Head of caudate nucleus (tissue), 42 donors: ENCODE measurements at regions of chr20 and their contacts with region 1.

Region 1: GRCh38 chr20:21235484-21236445 is 67.4 kb upstream of the XRN2 start:
- DNase-seq: peak; percentile 64 to 94 (median 87)

Region 2: DNA sequence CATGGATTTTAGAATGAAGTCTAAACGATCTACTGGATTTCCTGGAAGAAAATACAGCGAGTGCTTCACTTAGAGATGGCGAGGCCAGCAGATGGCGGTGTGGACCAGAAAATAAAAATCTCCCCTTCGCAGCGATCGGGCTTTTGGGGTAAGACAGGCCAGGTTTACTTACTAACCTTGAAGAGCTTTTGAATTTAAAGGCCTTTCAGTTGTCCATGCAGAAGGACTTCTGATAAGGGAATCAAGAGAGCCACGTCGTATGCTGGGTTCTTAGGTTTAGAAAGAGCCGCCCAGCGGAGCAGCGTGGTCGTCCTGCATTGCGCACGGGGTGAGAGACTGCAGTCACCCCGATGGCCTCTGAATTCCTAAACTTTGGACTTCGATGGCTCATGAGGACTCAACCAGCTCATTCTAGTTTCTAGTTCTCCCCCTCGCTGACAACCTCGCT is 398.2 kb before region 1 on chr20:
- intact Hi-C with region 1: loop called (anchors 5 kb)
- DNase-seq: peak; percentile 31 to 93 (median 82)

Region 3: DNA sequence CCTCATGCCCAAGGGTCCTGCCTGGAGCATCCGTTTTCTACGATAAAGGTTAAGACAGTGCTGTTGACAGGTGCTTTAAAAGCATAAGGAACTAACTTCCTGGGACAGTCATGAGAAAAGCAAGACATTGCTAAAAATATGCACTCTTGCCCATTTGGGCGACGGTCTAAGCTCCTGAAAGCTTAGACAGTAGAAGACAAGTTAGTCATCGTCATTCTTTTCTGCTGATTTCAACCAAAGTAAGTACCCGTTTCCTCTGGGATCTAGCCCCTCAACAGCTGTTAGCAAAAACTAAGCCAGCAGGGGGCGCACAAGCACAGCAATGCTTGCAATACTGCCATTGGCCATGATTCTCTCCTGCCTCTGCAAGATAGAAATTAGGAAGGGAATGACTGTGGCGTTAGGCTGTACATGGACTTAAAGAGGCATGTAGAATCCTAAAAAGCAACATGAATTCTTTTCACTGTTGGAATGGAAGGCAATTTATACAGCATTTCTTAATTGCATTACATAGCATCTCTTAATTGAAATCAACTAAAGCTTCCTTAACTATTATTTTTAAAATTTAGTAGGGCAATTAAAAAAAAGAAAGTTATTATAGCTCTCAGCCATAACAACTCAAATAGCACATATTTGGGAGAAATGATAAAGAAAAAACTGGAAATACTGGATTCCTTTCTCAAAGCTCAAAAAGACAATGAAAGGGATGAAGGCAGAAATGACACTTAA is 375.5 kb before region 1 on chr20:
- intact Hi-C with region 1: loop called (anchors 5 kb)
- DNase-seq: peak; percentile 81 to 99 (median 95)

Region 4: DNA sequence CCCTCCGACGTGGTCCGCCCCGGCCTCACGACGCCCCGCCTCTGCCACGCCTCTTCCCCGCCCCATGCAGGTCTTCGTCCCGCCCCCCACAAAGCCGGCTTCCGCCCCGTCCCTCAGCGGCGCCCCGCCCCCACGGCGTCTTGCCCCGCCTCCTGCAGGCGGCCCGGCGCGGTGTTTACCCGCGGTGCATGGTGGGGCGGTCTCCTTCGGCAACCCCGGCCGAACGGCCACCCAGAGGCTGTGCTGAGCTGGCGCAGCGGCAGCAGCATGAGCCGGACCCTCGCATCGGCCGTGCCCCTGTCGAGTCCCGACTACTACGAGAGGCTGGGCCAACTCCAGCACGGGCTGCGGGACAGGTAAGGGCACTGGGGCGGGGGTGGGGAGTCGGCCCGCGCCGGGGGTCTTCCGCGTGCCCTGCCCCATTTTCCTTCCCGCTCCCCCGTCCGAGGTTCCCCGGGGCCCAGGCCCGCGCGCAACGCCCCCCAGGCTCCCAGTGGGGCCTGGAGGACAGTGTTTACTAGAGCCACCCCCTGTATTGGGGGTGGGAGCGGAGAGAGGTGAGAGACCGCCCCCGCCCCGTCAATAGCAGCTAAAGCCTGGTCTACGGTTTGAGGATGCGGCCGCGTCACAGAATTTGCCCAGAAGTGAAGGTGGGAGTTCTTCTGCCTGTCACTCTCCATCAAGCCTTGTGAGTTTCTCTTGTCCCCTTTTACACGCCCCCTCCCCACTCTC is 109.8 kb before region 1 on chr20 and contains the start of gene KIZ:
- intact Hi-C with region 1: loop called (anchors 10 kb)
- DNase-seq: peak; percentile 85 to 100 (median 98)

Region 5: DNA sequence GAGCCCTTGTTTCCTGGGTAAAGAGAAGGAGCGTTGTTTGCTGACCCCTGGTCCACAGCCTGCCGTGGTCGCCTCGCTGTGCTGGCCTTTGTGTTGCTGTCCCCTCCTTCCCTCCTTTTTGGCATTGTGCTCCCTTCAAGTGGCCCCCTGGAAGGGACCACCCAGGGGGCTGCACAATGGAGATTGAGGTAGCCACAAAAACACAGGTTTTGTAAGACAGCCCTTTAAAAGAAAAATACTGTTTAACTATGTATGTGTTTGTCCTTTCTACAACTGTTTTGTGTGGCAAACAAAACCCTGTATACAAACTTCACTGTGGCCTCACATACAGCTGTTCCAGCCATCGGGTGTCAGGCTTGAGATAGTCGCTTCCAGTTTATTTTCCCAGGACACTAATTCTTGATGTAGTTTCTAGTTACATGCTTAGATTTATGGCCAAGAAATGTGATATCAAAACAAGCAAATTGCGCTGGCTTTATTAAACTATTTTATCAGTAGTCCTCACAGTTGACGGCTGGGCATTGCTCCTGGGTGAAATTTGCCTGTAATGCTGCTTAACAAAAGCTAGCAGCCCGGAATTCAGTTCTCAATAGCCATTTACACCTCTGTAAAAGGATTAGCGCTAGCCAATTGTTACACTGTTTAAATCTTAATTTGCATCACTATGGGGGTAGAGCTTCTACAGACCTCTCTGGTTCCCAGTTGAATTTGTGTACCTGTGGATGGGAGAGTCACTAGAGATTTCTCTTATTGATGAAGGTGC is 45.8 kb before region 1 on chr20:
- intact Hi-C with region 1: no loop called
- DNase-seq: peak in 1 of 42 donors; percentile 7

Region 6: DNA sequence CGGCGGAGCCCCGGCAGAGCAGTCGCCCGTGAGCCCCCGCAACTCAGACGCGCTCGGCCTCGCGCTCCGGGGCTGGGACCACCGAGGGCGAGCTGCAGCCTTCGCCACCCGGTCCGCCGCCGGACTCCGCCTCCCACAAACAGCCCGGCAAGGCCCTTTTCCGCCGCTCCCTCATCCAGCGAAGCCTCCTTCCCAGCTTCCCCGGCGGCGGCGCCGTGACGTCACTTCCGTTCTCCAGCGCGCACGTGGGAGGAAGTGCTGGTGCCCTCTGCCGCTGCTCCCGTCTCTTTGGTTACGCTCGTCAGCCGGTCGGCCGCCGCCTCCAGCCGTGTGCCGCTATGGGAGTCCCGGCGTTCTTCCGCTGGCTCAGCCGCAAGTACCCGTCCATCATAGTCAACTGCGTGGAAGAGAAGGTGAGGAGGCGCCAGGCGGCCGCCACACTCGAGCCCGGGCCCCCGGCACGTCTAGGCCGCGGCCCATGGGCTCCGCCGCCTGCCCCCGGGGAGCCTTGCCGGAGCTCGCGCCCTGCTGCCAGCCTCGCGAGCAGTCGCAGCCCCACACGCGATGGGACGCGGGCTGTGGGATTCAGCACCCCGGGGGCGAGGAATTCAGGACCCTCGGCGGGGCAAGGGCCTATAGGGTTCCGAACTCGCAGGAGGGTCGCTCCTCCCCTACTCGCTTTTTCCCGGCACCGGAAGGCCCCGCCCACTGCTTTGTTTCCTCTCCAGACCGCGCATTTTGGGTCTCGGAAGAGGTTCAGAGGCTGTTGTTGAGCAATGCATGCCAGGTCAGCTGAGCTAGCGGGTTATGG is 67.5 kb after region 1 on chr20 and contains the start of gene XRN2:
- intact Hi-C with region 1: loop called (anchors 5 kb)
- DNase-seq: peak; percentile 86 to 99 (median 96)

Region 7: GRCh38 chr20:21505161-21505809 is 269.5 kb after region 1 on chr20:
- intact Hi-C with region 1: loop called (anchors 1 kb)
- DNase-seq: peak in 41 of 42 donors; percentile 70 to 94 (median 84)

Region 8: DNA sequence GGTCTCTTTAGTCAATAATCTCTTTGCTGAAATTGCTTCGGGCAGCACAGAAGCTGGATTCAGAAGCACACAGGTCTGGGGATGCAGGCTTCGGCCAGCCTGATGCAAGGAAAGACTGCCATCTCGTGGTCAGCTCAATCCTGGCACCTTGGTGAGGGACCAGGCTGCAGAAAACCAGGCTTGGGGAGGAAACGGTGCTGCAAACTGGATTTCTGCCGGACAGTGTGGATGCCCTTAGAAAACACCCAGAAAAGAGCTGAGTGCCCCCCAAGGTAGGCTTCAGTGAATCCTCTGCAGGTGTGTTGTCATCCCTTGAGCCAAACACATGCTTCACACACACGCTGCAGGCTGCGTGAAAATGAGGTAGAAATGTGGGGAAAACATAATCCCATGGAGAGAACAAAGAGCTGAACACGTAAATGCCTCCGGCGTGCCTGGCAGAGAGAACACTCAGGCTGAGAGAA is 379.9 kb after region 1 on chr20:
- intact Hi-C with region 1: loop called (anchors 5 kb)
- DNase-seq: peak; percentile 72 to 96 (median 88)